OCI-LY7 (cell line): ENCODE measurements at regions of chr16 and their contacts with region 1.

Region 1: GRCh38 chr16:22117609-22118008 is 25.3 kb downstream of the VWA3A start:
- DNase-seq: no peak
- H3K4me3 ChIP-seq: no peak overlapping the region
- H3K27ac ChIP-seq: no peak overlapping the region
- H3K4me1 ChIP-seq: no peaks in the 10 kb centered on the region
- CTCF ChIP-seq: no peak

Region 2: GRCh38 chr16:22098405-22099255 is 19.0 kb before region 1 on chr16:
- CTCF ChIA-PET with region 1: no interaction called
- POLR2A ChIA-PET with region 1: interaction called, 11 read pairs
- intact Hi-C with region 1: no loop called
- DNase-seq: peak; percentile 76
- H3K4me3 ChIP-seq: peak overlapping the region; percentile 22
- H3K27ac ChIP-seq: no peak overlapping the region
- H3K4me1 ChIP-seq: no peaks in the 10 kb centered on the region
- CTCF ChIP-seq: peak; percentile 89